Left cardiac atrium (tissue), 4 donors: ENCODE measurements at regions of chr15 and their contacts with region 1.

Region 1: GRCh38 chr15:26864664-26865191 is 2.1 kb upstream of the GABRA5 start:
- DNase-seq: peak; percentile 44
- ATAC-seq: peak; percentile 69 to 72

Region 2: GRCh38 chr15:25947323-25948314 is 917.1 kb before region 1 on chr15:
- intact Hi-C with region 1: loop called in 1 of 2 experiments (anchors 5 kb)
- DNase-seq: no peak
- ATAC-seq: no peak

Region 3: GRCh38 chr15:26294059-26294689 is 570.6 kb before region 1 on chr15:
- intact Hi-C with region 1: loop called in 1 of 2 experiments (anchors 2 kb)
- DNase-seq: peak; percentile 55
- ATAC-seq: peak; percentile 97

Region 4: DNA sequence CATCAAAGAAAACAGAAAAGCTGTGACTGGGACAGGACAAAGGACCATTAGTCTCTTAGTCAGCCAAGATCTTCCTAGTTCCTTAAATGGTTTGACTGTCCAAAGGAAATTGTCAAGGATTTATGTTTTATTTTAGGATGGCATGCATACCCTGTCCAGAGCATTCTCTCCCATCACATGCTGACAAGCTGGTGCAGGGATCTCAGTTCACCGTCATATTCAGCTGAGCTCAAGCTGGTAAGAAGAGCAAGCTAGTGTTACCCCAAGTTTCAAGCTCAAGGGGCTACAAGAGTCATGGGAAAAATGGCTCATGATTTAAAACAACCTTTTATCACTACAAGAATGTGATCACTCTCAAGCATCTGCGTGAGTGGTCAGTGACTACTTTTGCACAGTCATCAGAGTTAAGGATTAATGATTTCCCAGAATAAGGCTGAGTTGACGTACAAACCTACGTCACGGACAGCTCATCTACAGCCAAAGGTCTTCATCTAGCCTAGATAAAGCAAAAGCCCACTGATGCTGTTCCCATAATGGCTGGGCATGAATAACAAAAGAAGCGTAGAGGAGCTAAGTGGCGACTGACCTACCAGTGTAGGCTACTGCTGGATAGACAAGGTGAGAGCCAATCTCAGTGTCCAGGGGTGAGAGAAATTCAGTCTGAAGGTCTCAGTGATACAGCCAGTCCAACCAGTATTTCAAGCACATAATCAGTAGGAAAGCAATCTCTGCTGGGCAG is 249.4 kb before region 1 on chr15:
- intact Hi-C with region 1: loop called in 1 of 2 experiments (anchors 10 kb)
- DNase-seq: no peak
- ATAC-seq: peak; percentile 52 to 59

Region 5: DNA sequence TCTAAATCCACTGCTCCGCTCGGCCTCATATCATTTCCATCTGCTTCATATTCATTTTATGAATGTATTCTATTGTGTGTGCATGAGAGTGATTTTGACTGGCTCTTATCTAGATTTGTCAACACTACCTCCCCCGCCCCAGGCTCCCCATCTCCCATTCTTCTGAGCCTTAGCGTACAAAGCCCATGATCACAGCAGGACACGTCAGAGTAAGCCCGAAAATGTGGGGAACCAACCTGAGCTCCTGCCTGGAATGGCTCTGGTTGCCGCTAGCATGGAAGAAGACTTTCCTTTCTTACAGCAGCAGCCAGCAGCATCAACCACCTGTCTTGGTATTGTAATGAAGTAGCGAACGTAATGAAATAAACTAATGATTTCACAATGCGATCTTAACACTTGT is 153.3 kb before region 1 on chr15:
- intact Hi-C with region 1: no loop called
- DNase-seq: no peak
- ATAC-seq: no peak

Region 6: GRCh38 chr15:26806144-26806543 is 58.6 kb before region 1 on chr15:
- intact Hi-C with region 1: loop called in 1 of 2 experiments (anchors 5 kb)
- DNase-seq: no peak
- ATAC-seq: peak; percentile 89

Region 7: DNA sequence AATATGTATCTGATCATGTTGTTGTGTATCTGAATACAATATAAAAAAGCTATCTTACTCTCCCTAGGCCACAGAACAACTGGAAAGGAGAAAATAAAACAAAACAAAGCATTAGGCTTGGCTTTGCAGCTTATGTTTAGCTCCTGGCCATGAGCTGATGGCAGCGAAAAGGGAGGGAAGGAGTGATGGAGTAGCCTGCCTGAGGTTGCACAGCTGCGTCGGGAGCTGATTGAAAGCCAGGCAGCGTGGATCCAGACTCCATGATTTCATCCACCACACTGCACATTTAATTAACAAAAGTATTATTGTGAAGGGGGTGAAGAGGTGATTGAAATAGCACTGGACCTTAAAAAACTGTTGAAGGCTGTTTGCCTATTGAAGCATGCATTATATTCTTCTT is 318.5 kb after region 1 on chr15:
- intact Hi-C with region 1: no loop called
- DNase-seq: no peak
- ATAC-seq: no peak

Region 8: GRCh38 chr15:27527490-27528067 is 662.9 kb after region 1 on chr15:
- intact Hi-C with region 1: no loop called
- DNase-seq: no peak
- ATAC-seq: no peak